Activated CD4-positive, alpha-beta memory T cell treated with anti-CD3 and anti-CD28 coated beads for 36 hours (primary cell): ENCODE measurements at regions of chr17 and their contacts with region 1.

Region 1: DNA sequence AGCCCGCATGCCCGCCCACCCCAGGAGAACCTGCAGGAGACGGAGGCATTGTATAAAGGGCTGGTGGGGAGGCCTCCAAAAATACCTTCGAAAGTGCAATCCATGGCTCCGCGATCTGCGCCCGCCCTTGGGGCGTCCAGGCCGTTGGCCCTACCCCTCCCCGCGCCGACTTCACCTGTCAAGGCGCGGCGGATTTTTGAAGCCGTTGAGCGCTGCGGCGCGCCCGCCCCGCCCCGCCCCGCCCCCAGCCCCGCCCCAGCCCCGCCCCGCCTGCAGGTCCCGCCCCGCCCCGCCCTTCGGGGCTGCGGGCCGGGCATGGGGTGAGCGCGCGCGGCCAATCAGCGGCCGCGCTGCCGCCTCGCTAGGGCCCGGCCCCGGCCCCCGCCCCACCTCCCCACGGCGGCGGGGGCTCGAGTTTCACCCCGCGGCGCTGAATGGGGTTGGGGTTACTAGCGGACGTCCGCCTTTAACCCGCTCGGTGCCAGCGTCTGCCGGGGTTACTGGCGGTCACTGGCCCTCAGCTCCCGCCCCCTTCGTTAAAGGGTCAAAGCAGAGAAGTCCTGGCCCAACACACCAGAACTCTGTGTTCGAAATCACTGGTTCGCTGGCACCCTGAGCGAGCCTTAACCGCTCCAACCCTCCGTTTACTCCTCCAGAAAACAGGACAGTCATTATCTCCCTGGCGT is 13.2 kb downstream of the SREBF1 start:
- DNase-seq: peak; percentile 89
- H3K4me3 Mint-ChIP-seq: peak overlapping the region; percentile 68
- H3K27ac Mint-ChIP-seq: peak overlapping the region; percentile 92
- H3K4me1 Mint-ChIP-seq: peaks cover 94% of the 10 kb centered on the region
- H3K27me3 Mint-ChIP-seq: no peaks in the 10 kb centered on the region

Region 2: DNA sequence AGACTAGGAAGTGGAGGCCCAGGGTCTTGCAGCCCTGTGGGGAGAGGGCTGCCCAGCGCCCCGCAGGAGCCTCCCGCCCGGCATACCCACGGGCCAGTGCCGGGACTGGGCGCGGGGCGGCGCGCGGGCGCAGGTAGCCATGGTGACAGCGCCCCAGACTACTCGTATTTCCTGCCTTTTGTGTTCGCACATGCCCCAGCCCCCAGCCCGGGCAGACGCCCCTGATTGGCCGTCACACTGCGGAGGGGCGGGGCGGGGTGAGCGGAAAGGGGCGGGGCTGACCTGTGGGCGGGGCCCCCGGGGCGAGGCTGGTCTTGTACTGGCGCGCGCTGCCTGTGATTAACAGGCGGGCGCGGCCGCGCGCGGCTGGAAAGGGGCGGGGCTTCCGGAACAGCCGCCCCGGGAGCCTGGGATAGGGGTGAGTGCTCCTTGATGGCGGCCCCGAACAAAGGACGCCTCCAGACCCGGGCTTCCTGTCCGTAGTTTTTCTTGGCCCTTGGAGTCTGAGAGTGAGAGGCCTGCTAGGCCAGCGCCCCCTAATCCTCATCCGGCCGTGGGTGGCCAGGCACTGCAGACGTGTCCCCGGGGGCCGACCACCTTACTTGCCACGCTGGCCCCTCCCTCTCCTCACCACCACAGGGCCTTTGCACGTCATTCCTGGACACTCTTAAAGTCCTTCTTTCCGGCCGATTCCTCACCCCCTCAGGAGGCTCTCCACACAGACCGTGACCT is 71.3 kb before region 1 on chr17:
- CTCF ChIA-PET with region 1: no interaction called
- POLR2A ChIA-PET with region 1: interaction called, 3 read pairs
- intact Hi-C with region 1: loop called (anchors 2 kb)
- DNase-seq: peak; percentile 99
- H3K4me3 Mint-ChIP-seq: peak overlapping the region; percentile 96
- H3K27ac Mint-ChIP-seq: peak overlapping the region; percentile 93
- H3K4me1 Mint-ChIP-seq: peaks cover 39% of the 10 kb centered on the region
- H3K27me3 Mint-ChIP-seq: no peaks in the 10 kb centered on the region

Region 3: DNA sequence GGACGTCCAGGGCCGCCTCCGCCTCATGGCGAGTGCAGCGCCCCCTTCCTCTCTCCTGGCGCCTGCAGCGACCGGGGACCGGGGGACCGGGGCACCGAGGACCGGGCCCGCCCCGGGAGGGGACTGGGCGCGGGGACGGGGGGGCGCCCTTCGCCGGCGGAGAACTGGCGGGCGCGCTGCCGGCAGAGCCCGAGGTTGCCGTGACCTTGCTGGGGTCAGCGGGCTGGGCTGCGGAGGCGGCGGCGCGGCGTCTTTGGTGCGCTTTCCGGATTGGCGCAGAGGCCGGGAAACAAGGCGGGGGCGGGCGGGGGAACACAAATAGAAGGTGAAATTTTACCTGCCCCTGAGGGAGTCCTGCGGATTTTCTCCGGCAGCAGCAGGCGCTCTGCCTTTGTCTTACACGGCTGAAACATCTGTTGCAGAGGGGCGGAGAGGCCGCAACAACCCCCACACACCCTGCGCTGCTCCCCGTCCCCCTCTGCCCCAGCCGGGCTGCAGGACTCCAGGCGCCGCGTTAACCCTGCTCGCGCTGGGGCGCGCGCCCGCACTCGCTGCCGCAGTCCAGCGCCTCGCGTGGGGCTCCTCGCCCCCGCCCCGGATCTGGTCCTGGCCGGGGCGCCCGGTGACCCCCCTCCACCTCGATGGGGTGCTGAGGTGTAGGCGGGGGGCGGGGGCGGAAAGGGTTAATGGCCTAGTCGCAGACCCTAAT is 40.3 kb before region 1 on chr17:
- CTCF ChIA-PET with region 1: no interaction called
- POLR2A ChIA-PET with region 1: no interaction called
- intact Hi-C with region 1: no loop called
- DNase-seq: peak; percentile 75
- H3K4me3 Mint-ChIP-seq: peak overlapping the region; percentile 67
- H3K27ac Mint-ChIP-seq: no peak overlapping the region
- H3K4me1 Mint-ChIP-seq: peaks cover 7% of the 10 kb centered on the region
- H3K27me3 Mint-ChIP-seq: no peaks in the 10 kb centered on the region

Region 4: GRCh38 chr17:17812211-17813057 is 11.1 kb before region 1 on chr17:
- CTCF ChIA-PET with region 1: interaction called, 13 read pairs
- POLR2A ChIA-PET with region 1: interaction called, 5 read pairs
- intact Hi-C with region 1: no loop called
- DNase-seq: peak; percentile 73
- H3K4me3 Mint-ChIP-seq: no peak overlapping the region
- H3K27ac Mint-ChIP-seq: peak overlapping the region; percentile 38
- H3K4me1 Mint-ChIP-seq: peaks cover 4% of the 10 kb centered on the region
- H3K27me3 Mint-ChIP-seq: no peaks in the 10 kb centered on the region

Region 5: DNA sequence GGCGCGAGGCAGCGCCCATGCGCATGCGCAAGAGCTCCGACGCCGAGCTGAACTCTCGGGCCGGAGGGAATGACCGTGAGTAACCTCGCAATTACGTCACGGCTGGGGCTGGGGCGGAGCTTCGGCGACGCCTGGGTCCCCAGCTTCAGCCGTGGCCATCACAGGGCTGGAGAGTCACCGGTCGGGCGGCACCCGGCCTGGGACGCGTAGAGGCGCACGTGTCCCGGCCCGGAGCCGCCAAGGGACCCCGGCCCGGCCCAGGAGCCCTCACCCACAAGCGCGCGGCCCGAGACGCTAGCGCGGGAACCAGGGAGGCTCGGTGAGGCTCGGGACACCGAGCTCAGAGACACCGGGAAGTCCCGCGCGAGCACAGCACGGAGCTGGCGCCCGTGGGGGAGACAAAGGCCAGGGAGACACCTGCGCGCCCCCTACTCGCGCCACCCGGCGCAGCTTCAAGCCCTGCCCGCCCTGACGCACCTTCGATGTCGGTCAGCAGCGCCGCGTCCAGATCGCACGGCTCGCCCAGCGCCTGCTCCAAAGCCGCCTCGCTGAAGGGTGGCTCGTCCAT is 12.8 kb after region 1 on chr17:
- CTCF ChIA-PET with region 1: interaction called, 6 read pairs
- POLR2A ChIA-PET with region 1: interaction called, 135 read pairs
- intact Hi-C with region 1: loop called (anchors 1 kb)
- DNase-seq: peak; percentile 99
- H3K4me3 Mint-ChIP-seq: peak overlapping the region; percentile 89
- H3K27ac Mint-ChIP-seq: peak overlapping the region; percentile 96
- H3K4me1 Mint-ChIP-seq: peaks cover 68% of the 10 kb centered on the region
- H3K27me3 Mint-ChIP-seq: no peaks in the 10 kb centered on the region

Region 6: GRCh38 chr17:17849845-17850373 is 26.3 kb after region 1 on chr17:
- CTCF ChIA-PET with region 1: interaction called, 8 read pairs
- POLR2A ChIA-PET with region 1: interaction called, 11 read pairs
- intact Hi-C with region 1: loop called (anchors 1 kb)
- DNase-seq: peak; percentile 93
- H3K4me3 Mint-ChIP-seq: no peak overlapping the region
- H3K27ac Mint-ChIP-seq: peak overlapping the region; percentile 97
- H3K4me1 Mint-ChIP-seq: peaks cover 70% of the 10 kb centered on the region
- H3K27me3 Mint-ChIP-seq: no peaks in the 10 kb centered on the region

Region 7: DNA sequence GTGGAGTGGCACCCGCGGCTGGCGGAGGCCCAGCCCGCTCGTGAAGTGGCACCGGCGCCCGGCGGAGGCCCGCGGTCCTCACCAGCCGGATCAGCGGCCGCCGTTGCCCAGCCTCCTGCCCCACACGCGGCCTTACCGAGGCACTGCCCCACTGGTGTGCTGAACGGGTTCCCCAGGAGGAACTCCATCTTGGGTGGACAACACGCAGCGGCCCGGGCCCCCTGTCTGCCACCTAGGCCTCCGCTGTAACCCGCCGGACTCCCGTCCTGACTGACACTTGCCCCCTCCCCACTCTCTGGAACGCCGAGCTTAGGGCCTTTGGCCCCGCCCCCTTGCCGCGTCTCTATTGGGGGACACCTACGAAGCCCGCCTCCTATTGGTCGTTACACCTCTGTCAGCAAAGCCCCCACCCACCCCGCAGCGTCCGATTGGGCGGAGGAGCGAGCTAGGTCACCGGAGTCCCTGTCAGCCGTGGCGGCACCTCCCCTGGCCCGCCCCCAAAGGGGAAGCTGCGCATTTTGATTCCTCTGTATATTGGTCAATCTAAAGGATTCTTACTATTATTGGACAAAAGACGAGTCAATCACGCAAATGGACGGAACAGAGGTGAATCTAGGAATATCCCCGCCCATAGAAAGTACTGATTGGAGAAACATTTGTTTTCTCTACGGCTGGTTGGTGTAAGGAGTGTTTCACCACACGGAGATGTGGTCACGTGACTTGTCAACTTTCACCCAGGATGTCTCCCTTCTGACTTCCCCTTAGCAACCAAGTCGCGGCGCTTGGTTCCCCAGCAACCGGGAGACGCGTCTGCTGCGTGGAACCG is 148.8 kb after region 1 on chr17 and contains the starts of genes DRC3 and TOM1L2:
- CTCF ChIA-PET with region 1: no interaction called
- POLR2A ChIA-PET with region 1: no interaction called
- intact Hi-C with region 1: loop called (anchors 1 kb)
- DNase-seq: peak; percentile 100
- H3K4me3 Mint-ChIP-seq: peak within 1 kb of the TSS; percentile 91
- H3K27ac Mint-ChIP-seq: peak within 1 kb of the TSS; percentile 78
- H3K4me1 Mint-ChIP-seq: peaks cover 35% of the 10 kb centered on the region
- H3K27me3 Mint-ChIP-seq: no peaks in the 10 kb centered on the region
- total RNA-seq, gene DRC3: 0.34 to 0.52 TPM
- total RNA-seq, gene TOM1L2: 11.1 to 12.7 TPM